ENCODE measurements at regions of chr20 and their contacts with region 1.

Region 1: GRCh38 chr20:16975682-16976081 is 227.5 kb downstream of the OTOR start:
- DNase-seq: no peak
- H3K4me3 ChIP-seq: no peak overlapping the region
- H3K27ac ChIP-seq: no peak overlapping the region
- H3K4me1 ChIP-seq: no peaks in the 10 kb centered on the region
- H3K27me3 ChIP-seq: no peaks in the 10 kb centered on the region
- CTCF ChIP-seq: no peak
- EP300 ChIP-seq: no peak
- POLR2A ChIP-seq: no peak

Region 2: GRCh38 chr20:16898433-16898832 is 77.2 kb before region 1 on chr20:
- in situ Hi-C with region 1: loop called in 1 of 4 experiments (anchors 25 kb)
- intact Hi-C with region 1: no loop called
- DNase-seq: no peak
- H3K4me3 ChIP-seq: no peak overlapping the region
- H3K27ac ChIP-seq: no peak overlapping the region
- H3K4me1 ChIP-seq: no peaks in the 10 kb centered on the region
- H3K27me3 ChIP-seq: no peaks in the 10 kb centered on the region
- CTCF ChIP-seq: no peak
- EP300 ChIP-seq: no peak
- POLR2A ChIP-seq: no peak